ENCODE measurements at regions of chr12 and their contacts with region 1.

Region 1: GRCh38 chr12:131028615-131029338 is 75.1 kb downstream of the ADGRD1 start:
- DNase-seq: no peak
- H3K4me3 ChIP-seq: no peak overlapping the region
- H3K27ac ChIP-seq: peak overlapping the region in 1 of 4 donors; percentile 50
- H3K4me1 ChIP-seq: peaks cover 0 to 17% (median 16%) of the 10 kb centered on the region in 4 donors
- H3K27me3 ChIP-seq: peaks cover 0 to 2% (median 0%) of the 10 kb centered on the region in 3 donors
- CTCF ChIP-seq: no peak
- EP300 ChIP-seq: no peak
- POLR2A ChIP-seq: no peak

Region 2: DNA sequence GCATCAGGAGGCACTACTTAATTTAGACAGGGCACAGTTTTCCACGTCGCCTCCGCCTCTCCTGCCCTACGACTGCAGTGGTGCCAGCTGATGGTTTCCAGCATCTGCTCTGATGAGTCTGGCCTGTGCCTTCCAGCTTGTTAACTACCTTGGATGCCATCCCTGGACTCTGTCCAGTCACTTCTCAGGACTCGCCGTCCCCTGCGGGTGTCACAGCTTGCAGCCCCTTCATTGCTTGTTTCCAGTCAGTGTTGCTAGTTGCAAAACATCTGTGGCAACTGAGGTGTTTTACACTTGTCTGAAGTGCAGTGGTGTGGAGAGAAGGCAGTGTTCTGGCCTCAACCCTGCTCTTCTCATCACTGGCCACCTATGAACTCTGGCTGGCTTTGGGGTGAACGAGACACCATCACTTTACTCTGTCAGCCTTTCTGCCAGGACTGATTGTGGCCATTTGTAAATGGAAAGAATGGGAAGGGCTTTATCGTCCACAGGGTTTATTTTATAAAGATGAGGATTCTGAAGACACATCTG is 66.8 kb before region 1 on chr12:
- intact Hi-C with region 1: loop called (anchors 2 kb)
- DNase-seq: peak; percentile 91
- H3K4me3 ChIP-seq: no peak overlapping the region
- H3K27ac ChIP-seq: peak overlapping the region; percentile 63 to 78 (median 74)
- H3K4me1 ChIP-seq: peaks cover 0 to 37% (median 18%) of the 10 kb centered on the region in 4 donors
- H3K27me3 ChIP-seq: no peaks in the 10 kb centered on the region
- CTCF ChIP-seq: no peak
- EP300 ChIP-seq: peak in 3 of 4 donors; percentile 53 to 83 (median 73)
- POLR2A ChIP-seq: no peak